MCF 10A (cell line): ENCODE measurements at regions of chr7 and their contacts with region 1.

Region 1: GRCh38 chr7:25894902-25895791 is 256.9 kb upstream of the NFE2L3 start:
- DNase-seq: peak; percentile 6
- H3K4me3 Mint-ChIP-seq: peak overlapping the region; percentile 45
- H3K27ac Mint-ChIP-seq: no peak overlapping the region
- H3K4me1 Mint-ChIP-seq: peaks cover 10% of the 10 kb centered on the region
- H3K27me3 Mint-ChIP-seq: no peaks in the 10 kb centered on the region
- CTCF ChIP-seq: peak; percentile 28

Region 2: DNA sequence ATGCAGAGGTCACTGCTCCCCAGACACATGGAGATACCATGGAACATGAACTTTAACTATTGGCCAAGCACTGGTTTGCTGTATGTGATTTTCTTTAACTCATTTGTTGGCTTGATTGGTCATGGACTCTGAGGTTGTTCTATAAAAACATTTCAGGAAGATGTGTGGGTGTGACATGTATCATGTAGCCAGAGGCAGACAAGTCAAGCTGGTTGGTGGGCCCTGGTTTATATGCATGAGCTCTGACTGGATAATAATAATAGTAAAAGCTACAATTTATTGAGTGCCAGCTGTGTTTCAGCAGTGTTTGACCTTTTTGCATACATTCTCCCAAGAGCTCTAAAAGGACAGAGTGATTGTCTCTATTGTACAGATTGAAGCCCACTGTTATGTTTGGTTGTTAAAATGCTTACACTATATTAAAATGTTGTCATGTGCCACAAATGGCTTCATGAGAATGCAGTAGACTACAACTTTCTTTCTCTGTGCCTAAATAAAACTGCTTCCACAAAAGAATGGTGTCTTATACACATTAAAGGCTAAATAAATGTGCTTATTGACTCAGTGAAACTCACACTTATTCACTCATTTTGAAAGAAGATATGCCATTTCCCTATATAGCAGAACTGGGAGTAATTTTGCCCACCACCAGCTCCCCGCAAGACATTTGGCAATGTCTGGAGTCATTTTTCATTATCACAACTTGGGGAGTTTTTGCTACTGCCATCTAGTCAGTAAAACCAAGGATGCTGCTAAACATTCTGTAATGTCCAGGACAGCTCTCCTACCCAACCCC is 13.2 kb after region 1 on chr7:
- CTCF ChIA-PET with region 1: interaction called, 46 read pairs
- POLR2A ChIA-PET with region 1: interaction called, 3 read pairs
- intact Hi-C with region 1: no loop called
- DNase-seq: no peak
- H3K4me3 Mint-ChIP-seq: no peak overlapping the region
- H3K27ac Mint-ChIP-seq: no peak overlapping the region
- H3K4me1 Mint-ChIP-seq: no peaks in the 10 kb centered on the region
- H3K27me3 Mint-ChIP-seq: no peaks in the 10 kb centered on the region
- CTCF ChIP-seq: no peak

Region 3: GRCh38 chr7:26061688-26062150 is 166.6 kb after region 1 on chr7:
- CTCF ChIA-PET with region 1: interaction called, 57 read pairs
- POLR2A ChIA-PET with region 1: interaction called, 5 read pairs
- intact Hi-C with region 1: loop called (anchors 1 kb)
- DNase-seq: peak; percentile 79
- H3K4me3 Mint-ChIP-seq: no peak overlapping the region
- H3K27ac Mint-ChIP-seq: no peak overlapping the region
- H3K4me1 Mint-ChIP-seq: no peaks in the 10 kb centered on the region
- H3K27me3 Mint-ChIP-seq: no peaks in the 10 kb centered on the region
- CTCF ChIP-seq: peak; percentile 76

Region 4: GRCh38 chr7:26078437-26079336 is 183.5 kb after region 1 on chr7:
- CTCF ChIA-PET with region 1: interaction called, 10 read pairs
- POLR2A ChIA-PET with region 1: no interaction called
- intact Hi-C with region 1: no loop called
- DNase-seq: peak; percentile 39
- H3K4me3 Mint-ChIP-seq: no peak overlapping the region
- H3K27ac Mint-ChIP-seq: no peak overlapping the region
- H3K4me1 Mint-ChIP-seq: no peaks in the 10 kb centered on the region
- H3K27me3 Mint-ChIP-seq: no peaks in the 10 kb centered on the region
- CTCF ChIP-seq: peak; percentile 20

Region 5: GRCh38 chr7:26291699-26292538 is 396.8 kb after region 1 on chr7 and contains the start of gene SNX10:
- CTCF ChIA-PET with region 1: interaction called, 11 read pairs
- POLR2A ChIA-PET with region 1: no interaction called
- intact Hi-C with region 1: no loop called
- DNase-seq: peak; percentile 58
- H3K4me3 Mint-ChIP-seq: peak within 1 kb of the TSS; percentile 79
- H3K27ac Mint-ChIP-seq: peak within 1 kb of the TSS; percentile 66
- H3K4me1 Mint-ChIP-seq: peaks cover 14% of the 10 kb centered on the region
- H3K27me3 Mint-ChIP-seq: no peaks in the 10 kb centered on the region
- CTCF ChIP-seq: peak; percentile 12
- total RNA-seq, gene SNX10: 7.1 and 8.0 TPM in 2 replicates

Region 6: DNA sequence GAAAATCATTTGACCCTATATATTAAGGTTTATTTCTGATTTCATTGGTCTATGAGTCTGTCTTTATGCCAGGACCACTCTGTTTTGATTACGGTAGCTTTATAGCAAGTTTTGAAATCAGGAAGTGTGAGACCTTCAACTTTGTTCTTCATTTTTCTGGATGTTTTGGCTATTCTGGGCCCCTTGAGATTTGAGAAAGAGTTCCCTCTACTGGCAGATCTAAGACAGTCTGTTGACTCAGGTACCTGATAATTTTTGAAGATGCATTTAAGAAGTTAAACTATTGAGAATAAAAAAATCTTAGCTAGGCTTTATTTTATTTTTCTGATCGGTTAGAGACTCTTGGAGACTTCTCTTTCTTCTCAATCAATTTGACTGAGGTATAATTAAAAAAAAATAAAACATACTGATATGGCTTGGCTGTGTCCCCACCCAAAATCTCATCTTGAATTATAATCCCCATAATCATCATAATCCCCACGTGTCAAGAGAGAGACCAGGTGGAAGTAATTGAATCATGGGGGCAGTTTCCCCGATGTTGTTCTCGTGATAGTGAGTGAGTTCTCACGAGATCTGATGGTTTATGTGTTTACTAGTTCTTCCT is 605.7 kb after region 1 on chr7:
- CTCF ChIA-PET with region 1: interaction called, 4 read pairs
- POLR2A ChIA-PET with region 1: no interaction called
- intact Hi-C with region 1: loop called (anchors 5 kb)
- DNase-seq: peak; percentile 53
- H3K4me3 Mint-ChIP-seq: no peak overlapping the region
- H3K27ac Mint-ChIP-seq: no peak overlapping the region
- H3K4me1 Mint-ChIP-seq: no peaks in the 10 kb centered on the region
- H3K27me3 Mint-ChIP-seq: no peaks in the 10 kb centered on the region
- CTCF ChIP-seq: peak; percentile 52